ENCODE measurements at regions of chr3 and their contacts with region 1.

Region 1: GRCh38 chr3:184314363-184314699 is at the start of gene EIF4G1:
- DNase-seq: peak; percentile 96
- ATAC-seq: peak; percentile 89
- H3K4me3 Mint-ChIP-seq: peak within 1 kb of the TSS; percentile 84
- H3K27ac Mint-ChIP-seq: peak within 1 kb of the TSS; percentile 90
- H3K4me1 Mint-ChIP-seq: peaks cover 29% of the 10 kb centered on the region
- H3K27me3 Mint-ChIP-seq: no peaks in the 10 kb centered on the region
- total RNA-seq, gene EIF4G1: 479 to 556 TPM

Region 2: DNA sequence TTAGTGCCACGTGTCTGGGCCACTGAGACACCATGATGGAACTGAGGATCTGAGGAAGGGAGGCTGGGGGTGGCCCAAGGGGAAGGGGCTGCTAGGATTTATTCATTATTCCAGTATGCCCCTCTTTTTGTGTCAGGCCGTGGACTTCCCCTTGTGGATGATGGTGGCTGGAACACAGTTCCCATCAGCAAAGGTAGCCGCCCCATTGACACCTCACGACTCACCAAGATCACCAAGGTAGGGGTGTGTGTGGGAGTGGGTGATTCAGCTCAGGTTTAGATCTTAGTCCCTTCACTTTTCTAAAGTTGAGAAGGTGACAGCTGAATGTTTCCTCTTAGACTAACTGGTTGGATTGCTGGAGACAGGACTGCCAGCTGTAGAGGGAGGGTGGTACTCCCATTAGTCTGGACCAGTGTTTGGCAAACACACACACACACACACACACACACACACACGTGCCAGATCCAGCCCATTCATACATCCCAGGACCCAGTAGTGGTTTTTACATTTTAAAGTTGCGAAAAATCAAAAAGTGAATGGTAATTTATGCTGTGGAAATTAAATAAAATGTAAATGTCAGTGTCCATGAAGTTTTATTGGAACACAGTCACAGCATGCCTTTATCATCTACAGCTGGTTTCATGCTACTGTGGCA is 11.5 kb after region 1 on chr3:
- CTCF ChIA-PET with region 1: interaction called, 3 read pairs
- POLR2A ChIA-PET with region 1: interaction called, 10 read pairs
- intact Hi-C with region 1: no loop called
- DNase-seq: peak; percentile 70
- ATAC-seq: peak; percentile 94
- H3K4me3 Mint-ChIP-seq: no peak overlapping the region
- H3K27ac Mint-ChIP-seq: peak overlapping the region; percentile 67
- H3K4me1 Mint-ChIP-seq: peaks cover 38% of the 10 kb centered on the region
- H3K27me3 Mint-ChIP-seq: no peaks in the 10 kb centered on the region

Region 3: DNA sequence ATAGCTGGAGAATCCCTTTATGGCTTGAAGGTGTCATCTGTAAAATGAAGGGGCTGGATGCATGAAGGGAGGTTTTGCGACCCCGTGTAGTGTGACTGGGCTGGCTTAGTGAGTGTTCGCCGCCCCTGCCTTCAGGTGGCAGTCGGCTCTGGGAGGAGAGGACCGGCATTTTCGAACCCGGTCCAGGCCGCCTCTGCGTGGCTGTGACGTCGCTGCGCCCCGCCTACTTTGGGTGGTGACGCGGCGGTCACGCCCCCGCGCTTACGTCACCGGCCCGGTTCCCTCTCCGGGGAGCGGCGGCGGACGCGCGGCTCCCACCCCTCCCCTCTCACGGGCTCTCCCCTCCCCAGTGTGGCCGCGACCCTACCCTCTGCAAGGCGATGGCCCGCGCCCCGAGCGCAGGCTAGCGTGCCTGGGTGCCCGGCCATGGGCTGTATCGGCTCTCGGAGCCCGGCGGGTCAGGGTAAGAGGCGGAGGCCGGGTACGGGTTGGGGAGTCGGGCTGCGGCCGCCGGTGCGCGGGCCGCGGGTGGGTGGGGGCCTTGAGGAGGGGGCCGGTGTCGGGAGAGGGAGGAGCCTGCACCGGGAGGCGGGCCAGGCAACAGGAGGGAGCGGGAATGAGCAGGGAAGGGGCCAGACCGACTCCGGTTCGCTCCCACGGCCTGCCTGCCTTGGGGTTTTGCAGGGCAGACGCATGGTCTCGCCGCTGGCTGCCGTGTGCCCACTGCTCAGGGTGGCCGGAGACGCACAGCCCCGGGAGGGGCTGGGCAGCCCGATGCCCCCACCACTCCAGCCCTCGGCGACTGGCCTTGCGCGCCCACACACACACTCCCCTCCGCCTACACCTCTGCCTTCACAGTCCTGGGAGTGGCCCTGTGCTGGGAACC is 21.6 kb after region 1 on chr3:
- CTCF ChIA-PET with region 1: interaction called, 3 read pairs
- POLR2A ChIA-PET with region 1: interaction called, 4 read pairs
- intact Hi-C with region 1: loop called (anchors 1 kb)
- DNase-seq: peak; percentile 92
- ATAC-seq: peak; percentile 50
- H3K4me3 Mint-ChIP-seq: peak overlapping the region; percentile 75
- H3K27ac Mint-ChIP-seq: peak overlapping the region; percentile 85
- H3K4me1 Mint-ChIP-seq: peaks cover 62% of the 10 kb centered on the region
- H3K27me3 Mint-ChIP-seq: no peaks in the 10 kb centered on the region

Region 4: DNA sequence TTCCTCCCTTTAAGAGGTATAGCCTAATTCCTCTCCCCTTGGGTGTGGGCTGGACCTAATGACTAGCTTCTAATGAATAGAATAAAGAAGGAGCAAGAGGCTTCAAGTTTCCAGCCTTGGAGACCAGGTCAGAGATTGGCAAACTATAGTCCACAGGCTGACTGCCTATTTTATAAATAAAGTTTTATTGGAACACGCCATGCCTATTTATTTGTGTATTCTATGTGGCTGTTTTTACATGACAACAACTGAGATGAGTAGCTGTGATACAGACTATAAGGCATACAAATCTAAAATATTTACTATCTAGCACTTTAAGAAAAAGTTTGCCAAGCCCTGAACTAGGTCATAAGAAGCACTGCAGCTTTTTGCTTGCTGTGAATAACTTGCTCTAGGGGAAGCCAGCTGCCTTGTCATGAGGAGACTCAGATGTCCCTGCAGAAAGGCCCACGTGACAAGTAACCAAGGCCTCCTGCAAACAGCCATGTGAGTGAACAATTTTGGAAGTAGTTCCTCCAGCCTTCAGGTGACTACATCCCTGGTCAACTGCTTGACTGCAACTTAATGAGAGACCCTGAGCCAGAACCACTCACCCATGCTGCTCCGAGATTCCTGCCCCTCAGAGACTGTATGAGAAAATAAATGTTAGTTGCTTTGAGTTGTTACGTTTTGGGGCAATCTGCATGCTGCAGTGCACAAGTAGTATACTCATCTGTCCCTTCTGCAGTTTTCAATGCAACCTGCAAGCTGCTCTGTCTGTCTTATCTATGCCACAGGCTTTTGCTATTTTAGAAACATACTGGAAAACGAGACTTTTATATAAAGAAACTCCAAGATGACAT is 1027.5 kb after region 1 on chr3:
- CTCF ChIA-PET with region 1: no interaction called
- POLR2A ChIA-PET with region 1: no interaction called
- intact Hi-C with region 1: no loop called
- DNase-seq: no peak
- ATAC-seq: no peak
- H3K4me3 Mint-ChIP-seq: no peak overlapping the region
- H3K27ac Mint-ChIP-seq: no peak overlapping the region
- H3K4me1 Mint-ChIP-seq: no peaks in the 10 kb centered on the region
- H3K27me3 Mint-ChIP-seq: no peaks in the 10 kb centered on the region